CD4-positive, alpha-beta T cell (primary cell): ENCODE measurements at regions of chr14 and their contacts with region 1.

Region 1: DNA sequence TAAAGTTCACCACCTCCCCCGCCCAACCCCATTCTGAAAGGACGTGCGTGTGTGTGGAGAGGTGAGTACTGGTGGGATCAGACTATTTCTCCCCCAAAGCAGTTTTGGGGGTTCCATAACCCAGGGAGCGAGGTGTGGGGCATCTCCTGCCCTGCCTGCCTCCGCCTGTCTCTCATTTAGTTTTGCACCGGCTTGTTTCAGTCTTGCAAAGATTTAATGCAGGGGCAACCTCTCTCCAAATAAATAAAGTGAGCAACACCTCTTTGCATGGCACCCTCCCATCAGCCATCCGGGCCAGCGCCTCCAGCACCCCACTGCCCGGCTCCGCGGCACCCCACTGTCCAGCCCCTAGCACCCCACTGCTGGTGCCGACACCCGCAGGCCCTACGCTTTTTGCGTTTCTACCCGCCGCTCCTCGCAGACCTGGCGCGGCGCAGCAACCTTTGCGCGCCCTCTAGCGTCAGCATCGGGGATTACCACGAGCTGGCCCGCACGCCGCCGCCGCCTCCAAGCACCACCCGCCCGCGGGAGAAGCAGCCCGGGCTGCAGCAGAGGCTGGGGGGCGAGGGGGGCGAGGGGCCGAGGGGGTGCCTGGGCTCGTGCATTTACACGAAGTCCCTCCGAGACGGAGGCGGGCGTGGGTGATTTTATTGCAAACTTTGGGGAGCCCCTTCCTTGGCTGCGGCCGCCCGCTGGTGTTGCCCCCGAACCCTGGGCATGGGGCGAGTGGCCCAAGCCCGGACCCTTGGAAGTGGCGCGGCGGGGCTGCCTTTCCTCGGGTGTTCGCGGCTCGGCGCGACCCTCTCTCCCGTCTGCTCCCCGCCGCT is 55.8 kb upstream of the VRK1 start:
- DNase-seq: peak; percentile 58 to 87 (median 72)
- ATAC-seq: peak; percentile 91
- H3K4me3 ChIP-seq: peak overlapping the region; percentile 45
- H3K4me3 Mint-ChIP-seq: peak overlapping the region; percentile 88
- H3K27ac ChIP-seq: no peak overlapping the region
- H3K27ac Mint-ChIP-seq: no peak overlapping the region
- H3K4me1 ChIP-seq: peaks cover 8% of the 10 kb centered on the region
- H3K4me1 Mint-ChIP-seq: peaks cover 14% of the 10 kb centered on the region
- H3K27me3 ChIP-seq: peaks cover 32 to 61% of the 10 kb centered on the region in 2 experiments
- H3K27me3 Mint-ChIP-seq: peaks cover 89% of the 10 kb centered on the region
- CTCF ChIP-seq: peak; percentile 97

Region 2: GRCh38 chr14:96297000-96297399 is 444.4 kb before region 1 on chr14:
- CTCF ChIA-PET with region 1: no interaction called
- POLR2A ChIA-PET with region 1: no interaction called
- intact Hi-C with region 1: loop called in 1 of 2 experiments (anchors 10 kb)
- DNase-seq: peak in 3 of 14 experiments; percentile 40 to 50 (median 43)
- ATAC-seq: no peak
- H3K4me3 ChIP-seq: no peak overlapping the region
- H3K4me3 Mint-ChIP-seq: no peak overlapping the region
- H3K27ac ChIP-seq: no peak overlapping the region
- H3K27ac Mint-ChIP-seq: no peak overlapping the region
- H3K4me1 ChIP-seq: no peaks in the 10 kb centered on the region
- H3K4me1 Mint-ChIP-seq: no peaks in the 10 kb centered on the region
- H3K27me3 ChIP-seq: no peaks in the 10 kb centered on the region
- H3K27me3 Mint-ChIP-seq: no peaks in the 10 kb centered on the region
- CTCF ChIP-seq: peak; percentile 51

Region 3: GRCh38 chr14:96567289-96567899 is 174.0 kb before region 1 on chr14:
- CTCF ChIA-PET with region 1: interaction called, 3 read pairs
- POLR2A ChIA-PET with region 1: no interaction called
- intact Hi-C with region 1: loop called (anchors 2 to 5 kb)
- DNase-seq: peak in 3 of 14 experiments; percentile 31 to 49 (median 44)
- ATAC-seq: peak; percentile 46
- H3K4me3 ChIP-seq: no peak overlapping the region
- H3K4me3 Mint-ChIP-seq: no peak overlapping the region
- H3K27ac ChIP-seq: no peak overlapping the region
- H3K27ac Mint-ChIP-seq: no peak overlapping the region
- H3K4me1 ChIP-seq: no peaks in the 10 kb centered on the region
- H3K4me1 Mint-ChIP-seq: no peaks in the 10 kb centered on the region
- H3K27me3 ChIP-seq: no peaks in the 10 kb centered on the region
- H3K27me3 Mint-ChIP-seq: no peaks in the 10 kb centered on the region
- CTCF ChIP-seq: peak; percentile 57

Region 4: DNA sequence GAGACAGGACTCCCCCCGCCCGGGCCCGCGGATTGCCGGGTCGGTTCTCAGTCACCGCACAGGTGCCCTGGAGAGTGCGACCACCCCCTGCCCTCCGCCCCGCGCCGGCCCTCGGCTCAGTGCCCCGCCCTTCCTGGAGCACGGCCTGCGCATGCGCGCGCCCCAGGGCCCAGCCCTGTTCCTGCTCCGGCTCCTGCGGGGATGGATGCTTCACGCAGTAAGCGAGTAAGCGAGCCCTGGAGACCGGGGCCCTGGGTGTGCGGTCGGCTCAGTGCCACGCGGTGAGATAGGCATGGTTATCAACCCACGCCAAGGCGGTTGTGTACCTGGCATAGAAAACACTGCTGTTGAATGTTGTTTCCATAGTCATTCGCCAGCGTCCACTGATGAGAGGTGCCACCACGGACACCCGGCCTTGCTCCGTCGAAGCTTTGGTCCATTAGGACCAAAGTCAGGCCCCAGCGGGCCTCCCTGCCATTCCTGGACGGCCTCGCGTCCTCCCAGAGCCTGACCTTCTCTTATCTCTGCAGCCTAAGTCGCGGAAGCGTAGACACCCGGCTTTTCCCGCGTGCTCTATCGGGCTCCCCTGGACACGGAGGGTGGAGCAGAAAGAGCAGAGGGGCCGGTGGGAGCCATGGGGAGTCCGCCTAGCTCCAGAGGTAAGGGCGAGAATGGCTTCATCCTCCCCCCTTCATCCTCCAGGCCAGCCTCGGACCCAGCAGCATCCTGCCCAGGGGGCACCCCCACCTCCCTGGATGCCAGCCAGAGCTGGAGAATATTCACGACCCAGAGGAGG is 148.6 kb before region 1 on chr14:
- CTCF ChIA-PET with region 1: no interaction called
- POLR2A ChIA-PET with region 1: no interaction called
- intact Hi-C with region 1: loop called in 1 of 2 experiments (anchors 10 kb)
- DNase-seq: peak; percentile 30 to 78 (median 60)
- ATAC-seq: peak; percentile 96
- H3K4me3 ChIP-seq: peak overlapping the region; percentile 68
- H3K4me3 Mint-ChIP-seq: peak overlapping the region; percentile 84
- H3K27ac ChIP-seq: no peak overlapping the region
- H3K27ac Mint-ChIP-seq: no peak overlapping the region
- H3K4me1 ChIP-seq: peaks cover 16% of the 10 kb centered on the region
- H3K4me1 Mint-ChIP-seq: peaks cover 8% of the 10 kb centered on the region
- H3K27me3 ChIP-seq: peaks cover 0 to 5% of the 10 kb centered on the region in 2 experiments
- H3K27me3 Mint-ChIP-seq: peaks cover 15% of the 10 kb centered on the region
- CTCF ChIP-seq: no peak

Region 5: DNA sequence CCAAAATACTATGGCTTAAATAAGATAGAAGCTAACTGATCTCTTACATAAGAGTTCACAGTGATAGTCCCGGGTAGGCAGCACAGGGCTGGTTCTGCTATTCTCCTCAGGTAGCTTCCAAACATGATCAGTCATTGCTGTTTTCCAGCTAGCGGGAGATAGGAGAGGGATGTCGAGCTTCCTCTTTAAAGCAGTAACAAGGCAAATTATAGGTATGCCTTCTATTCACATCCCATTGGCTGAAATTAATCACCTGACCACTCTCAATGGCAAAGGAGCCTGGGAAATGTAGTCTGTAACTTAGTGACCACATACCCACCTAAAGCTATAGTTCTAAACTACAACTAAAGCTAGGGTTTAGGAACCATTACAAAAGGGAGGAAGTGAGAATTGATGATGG is 21.3 kb after region 1 on chr14:
- CTCF ChIA-PET with region 1: interaction called, 12 read pairs
- POLR2A ChIA-PET with region 1: no interaction called
- intact Hi-C with region 1: no loop called
- DNase-seq: peak in 4 of 14 experiments; percentile 14 to 81 (median 78)
- ATAC-seq: peak; percentile 99
- H3K4me3 ChIP-seq: no peak overlapping the region
- H3K4me3 Mint-ChIP-seq: peak overlapping the region; percentile 67
- H3K27ac ChIP-seq: no peak overlapping the region
- H3K27ac Mint-ChIP-seq: no peak overlapping the region
- H3K4me1 ChIP-seq: no peaks in the 10 kb centered on the region
- H3K4me1 Mint-ChIP-seq: peaks cover 5% of the 10 kb centered on the region
- H3K27me3 ChIP-seq: peaks cover 0 to 5% of the 10 kb centered on the region in 2 experiments
- H3K27me3 Mint-ChIP-seq: peaks cover 6% of the 10 kb centered on the region
- CTCF ChIP-seq: no peak